B cell (primary cell): ENCODE measurements at regions of chr2 and their contacts with region 1.

Region 1: DNA sequence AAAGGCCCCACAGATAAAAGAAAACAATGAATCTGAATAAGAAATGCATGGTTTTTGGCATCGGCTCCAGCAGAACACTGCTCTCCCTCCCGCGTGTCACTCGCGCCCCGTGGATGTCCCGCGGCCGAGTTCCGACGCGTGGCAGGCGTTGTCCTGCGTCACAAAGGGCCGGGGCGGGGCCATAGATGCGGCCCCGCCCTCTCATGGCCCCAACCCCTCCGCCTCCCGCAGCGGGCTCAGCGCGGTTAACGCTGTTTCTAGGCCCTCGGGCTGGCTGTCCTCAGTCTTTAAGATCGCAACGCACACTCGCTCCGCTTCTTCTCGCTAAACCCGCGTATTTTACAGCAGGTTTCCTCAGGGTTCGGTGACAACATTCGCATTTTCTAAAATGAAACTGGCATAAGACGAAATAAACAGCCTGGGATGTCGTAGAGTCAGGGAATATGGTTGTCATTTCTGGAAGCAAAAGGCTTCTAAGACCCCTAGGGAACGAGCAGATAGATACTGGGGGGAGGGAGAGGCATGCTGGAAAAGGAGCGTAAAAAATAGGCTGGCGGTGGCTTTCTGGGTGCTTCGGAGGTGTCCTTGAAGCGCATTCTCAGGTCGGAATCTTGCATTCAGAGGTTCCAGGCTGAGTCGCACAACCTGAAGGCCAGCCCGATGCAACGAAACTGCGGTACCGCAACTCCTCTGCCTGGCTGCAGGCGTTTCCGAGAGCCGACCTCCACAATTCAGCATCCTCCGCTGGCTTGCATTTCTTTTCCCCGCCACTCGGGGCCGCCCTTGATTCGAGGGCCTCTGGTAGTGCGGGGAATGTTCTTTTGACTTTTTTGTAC is at the start of gene FKBP7:
- DNase-seq: peak; percentile 93
- ATAC-seq: peak; percentile 74
- H3K4me3 ChIP-seq: peak within 1 kb of the TSS; percentile 76 to 100 (median 98)
- H3K4me3 Mint-ChIP-seq: peak within 1 kb of the TSS; percentile 98
- H3K27ac ChIP-seq: peak within 1 kb of the TSS; percentile 86 to 90
- H3K27ac Mint-ChIP-seq: peak within 1 kb of the TSS; percentile 97
- H3K4me1 ChIP-seq: peaks cover 32 to 34% of the 10 kb centered on the region in 2 donors
- H3K4me1 Mint-ChIP-seq: peaks cover 41% of the 10 kb centered on the region
- H3K27me3 ChIP-seq: no peaks in the 10 kb centered on the region
- H3K27me3 Mint-ChIP-seq: no peaks in the 10 kb centered on the region
- CTCF ChIP-seq: peak; percentile 78
- total RNA-seq, gene FKBP7: 0.39 and 1.7 TPM in 2 replicates

Region 2: GRCh38 chr2:178331474-178332432 is 146.9 kb before region 1 on chr2:
- CTCF ChIA-PET with region 1: no interaction called
- POLR2A ChIA-PET with region 1: no interaction called
- intact Hi-C with region 1: no loop called
- DNase-seq: no peak
- ATAC-seq: no peak
- H3K4me3 ChIP-seq: no peak overlapping the region
- H3K4me3 Mint-ChIP-seq: no peak overlapping the region
- H3K27ac ChIP-seq: no peak overlapping the region
- H3K27ac Mint-ChIP-seq: no peak overlapping the region
- H3K4me1 ChIP-seq: no peaks in the 10 kb centered on the region
- H3K4me1 Mint-ChIP-seq: no peaks in the 10 kb centered on the region
- H3K27me3 ChIP-seq: no peaks in the 10 kb centered on the region
- H3K27me3 Mint-ChIP-seq: no peaks in the 10 kb centered on the region
- CTCF ChIP-seq: no peak

Region 3: DNA sequence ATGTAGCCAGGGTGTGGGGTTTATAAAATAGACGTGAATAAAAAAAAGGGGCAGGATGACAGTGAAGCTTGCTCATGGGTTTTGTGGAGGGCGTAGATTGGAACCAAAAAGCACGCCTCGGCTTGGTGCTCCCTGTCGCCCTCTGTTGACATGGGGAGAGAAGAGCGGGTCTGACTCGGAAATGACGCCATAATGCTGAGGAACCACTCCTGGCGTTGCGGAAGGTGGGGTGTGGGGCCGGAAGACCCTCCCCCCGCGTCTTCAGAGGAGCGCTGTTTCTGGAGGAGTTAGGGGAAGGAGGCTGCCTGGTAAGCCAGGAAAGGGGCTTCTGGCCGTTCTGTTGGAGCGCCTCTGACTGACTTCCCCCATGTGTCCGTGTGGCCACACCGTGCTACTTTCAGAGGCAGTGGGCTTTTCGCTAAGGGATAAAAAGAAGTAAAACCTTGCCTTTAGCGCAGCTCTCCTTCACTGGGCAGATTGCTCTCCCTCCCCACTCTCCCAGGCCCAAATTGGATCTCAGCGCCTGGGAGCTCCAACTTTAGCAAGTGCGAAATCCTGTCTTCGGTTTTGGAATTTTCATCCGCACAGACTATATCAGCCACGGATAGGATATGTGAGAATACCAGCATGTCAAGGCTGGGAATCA is 44.4 kb after region 1 on chr2:
- CTCF ChIA-PET with region 1: interaction called, 3 read pairs
- POLR2A ChIA-PET with region 1: no interaction called
- intact Hi-C with region 1: loop called (anchors 1 kb)
- DNase-seq: peak; percentile 88
- ATAC-seq: peak; percentile 98
- H3K4me3 ChIP-seq: peak overlapping the region; percentile 50 to 93 (median 90)
- H3K4me3 Mint-ChIP-seq: peak overlapping the region; percentile 95
- H3K27ac ChIP-seq: peak overlapping the region; percentile 4 to 78
- H3K27ac Mint-ChIP-seq: peak overlapping the region; percentile 88
- H3K4me1 ChIP-seq: peaks cover 11 to 12% of the 10 kb centered on the region in 2 donors
- H3K4me1 Mint-ChIP-seq: peaks cover 31% of the 10 kb centered on the region
- H3K27me3 ChIP-seq: no peaks in the 10 kb centered on the region
- H3K27me3 Mint-ChIP-seq: no peaks in the 10 kb centered on the region
- CTCF ChIP-seq: peak; percentile 77

Region 4: GRCh38 chr2:178530625-178531142 is 52.0 kb after region 1 on chr2:
- CTCF ChIA-PET with region 1: no interaction called
- POLR2A ChIA-PET with region 1: no interaction called
- intact Hi-C with region 1: loop called (anchors 2 kb)
- DNase-seq: peak; percentile 74
- ATAC-seq: peak; percentile 90
- H3K4me3 ChIP-seq: peak overlapping the region in 4 of 5 experiments; percentile 3 to 36 (median 11)
- H3K4me3 Mint-ChIP-seq: peak overlapping the region; percentile 85
- H3K27ac ChIP-seq: peak overlapping the region; percentile 57 to 73
- H3K27ac Mint-ChIP-seq: peak overlapping the region; percentile 87
- H3K4me1 ChIP-seq: peaks cover 10 to 26% of the 10 kb centered on the region in 2 donors
- H3K4me1 Mint-ChIP-seq: peaks cover 32% of the 10 kb centered on the region
- H3K27me3 ChIP-seq: no peaks in the 10 kb centered on the region
- H3K27me3 Mint-ChIP-seq: no peaks in the 10 kb centered on the region
- CTCF ChIP-seq: no peak